ENCODE measurements at regions of chr7 and their contacts with region 1.

Region 1: DNA sequence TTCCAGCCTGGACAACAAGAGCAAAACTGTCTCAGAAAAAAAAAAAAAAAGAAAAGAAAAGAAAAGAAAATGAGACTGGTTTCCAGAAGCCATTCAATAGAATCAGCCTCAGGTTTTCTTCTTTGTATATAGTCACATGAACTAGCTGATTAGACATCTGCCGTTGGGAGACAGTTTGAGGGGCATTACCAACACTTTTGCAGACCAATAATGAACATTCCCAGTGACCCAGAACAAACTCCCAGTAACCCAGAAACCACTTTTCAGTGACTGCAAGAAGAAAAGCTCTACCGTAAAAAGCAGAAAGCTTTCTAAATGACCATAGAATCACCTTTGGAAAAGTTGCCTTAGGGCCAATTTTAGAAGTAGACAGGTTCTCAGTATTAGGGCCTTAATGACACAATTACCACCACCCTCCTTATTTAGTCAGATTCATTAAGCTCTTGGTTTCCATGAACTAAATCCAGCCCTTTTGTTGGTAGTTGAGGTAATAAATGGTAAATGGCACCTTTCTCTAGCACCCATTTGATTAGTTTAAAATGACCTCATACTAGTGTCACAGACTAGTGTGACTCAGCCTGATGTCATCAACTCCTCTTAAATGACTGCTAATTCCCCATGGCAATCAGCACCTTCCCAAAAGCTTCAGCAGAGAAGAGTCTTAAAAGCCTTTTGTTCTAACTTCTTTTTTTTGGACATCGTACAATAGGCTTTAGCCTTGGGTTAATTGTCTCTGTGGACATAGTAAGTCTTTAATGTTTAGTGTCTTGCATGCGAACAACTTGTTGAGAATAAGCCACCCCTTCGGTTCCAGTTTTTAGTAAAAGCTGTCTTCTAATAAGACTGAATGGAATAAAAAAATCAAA is 33.6 kb upstream of the XRCC2 start:
- DNase-seq: no peak
- ATAC-seq: no peak
- H3K4me3 Mint-ChIP-seq: no peak overlapping the region
- H3K27ac Mint-ChIP-seq: no peak overlapping the region
- H3K4me1 Mint-ChIP-seq: peaks cover 3% of the 10 kb centered on the region
- H3K27me3 Mint-ChIP-seq: no peaks in the 10 kb centered on the region
- CTCF ChIP-seq: no peak

Region 2: GRCh38 chr7:152145853-152146466 is 563.6 kb before region 1 on chr7:
- CTCF ChIA-PET with region 1: no interaction called
- POLR2A ChIA-PET with region 1: no interaction called
- intact Hi-C with region 1: loop called (anchors 5 kb)
- DNase-seq: no peak
- ATAC-seq: peak; percentile 40
- H3K4me3 Mint-ChIP-seq: no peak overlapping the region
- H3K27ac Mint-ChIP-seq: no peak overlapping the region
- H3K4me1 Mint-ChIP-seq: peaks cover 3% of the 10 kb centered on the region
- H3K27me3 Mint-ChIP-seq: no peaks in the 10 kb centered on the region
- CTCF ChIP-seq: no peak

Region 3: DNA sequence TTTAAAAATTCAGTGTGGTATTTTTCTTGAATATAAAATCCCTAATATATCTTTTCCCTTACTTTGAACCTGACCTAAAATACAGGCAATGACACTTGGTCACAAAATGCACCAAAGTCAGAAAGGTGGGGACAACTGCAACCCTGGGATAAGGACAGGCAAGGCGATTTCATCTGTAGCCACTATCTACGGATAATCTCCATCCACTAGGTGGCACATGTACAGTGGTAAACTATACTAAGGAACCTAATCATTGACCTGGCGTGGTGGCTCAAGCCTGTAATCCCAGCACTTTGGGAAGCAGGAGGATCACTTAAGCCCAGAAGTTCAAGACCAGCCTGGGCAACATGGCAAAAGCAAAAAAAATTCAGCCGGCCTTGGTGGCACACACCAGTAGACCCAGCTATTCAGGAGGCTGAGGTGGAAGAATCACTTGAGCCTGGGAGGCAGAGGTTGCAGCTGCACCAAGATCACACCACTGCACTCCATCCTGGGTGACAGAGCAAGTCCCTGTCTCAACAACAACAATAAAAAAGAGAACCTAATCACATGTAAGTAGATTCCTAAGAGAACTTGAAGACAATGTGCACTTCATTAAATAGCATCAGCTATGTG is 372.7 kb before region 1 on chr7:
- CTCF ChIA-PET with region 1: interaction called, 40 read pairs
- POLR2A ChIA-PET with region 1: no interaction called
- intact Hi-C with region 1: loop called (anchors 1 kb)
- DNase-seq: no peak
- ATAC-seq: peak; percentile 45
- H3K4me3 Mint-ChIP-seq: no peak overlapping the region
- H3K27ac Mint-ChIP-seq: no peak overlapping the region
- H3K4me1 Mint-ChIP-seq: peaks cover 63% of the 10 kb centered on the region
- H3K27me3 Mint-ChIP-seq: no peaks in the 10 kb centered on the region
- CTCF ChIP-seq: peak; percentile 49

Region 4: DNA sequence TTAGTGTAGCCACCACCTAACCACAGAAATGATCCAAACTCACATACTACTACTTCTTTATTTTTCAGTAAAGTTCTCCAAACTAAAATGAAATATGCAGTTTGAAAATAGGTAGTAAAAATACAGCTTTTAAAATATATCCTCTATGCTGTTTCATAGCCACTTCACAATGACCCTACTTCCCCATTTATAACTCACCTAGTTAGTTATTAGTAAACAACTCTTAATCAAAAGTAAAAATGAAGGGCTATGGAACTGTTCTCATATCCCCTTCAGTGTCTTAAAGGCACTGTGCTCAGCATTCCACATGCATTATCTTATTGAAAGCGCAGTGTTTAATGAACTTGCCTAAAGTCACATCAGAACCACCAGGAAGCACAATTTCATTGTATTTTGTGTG is 317.3 kb before region 1 on chr7:
- CTCF ChIA-PET with region 1: no interaction called
- POLR2A ChIA-PET with region 1: no interaction called
- intact Hi-C with region 1: loop called (anchors 2 kb)
- DNase-seq: no peak
- ATAC-seq: peak; percentile 52
- H3K4me3 Mint-ChIP-seq: peak overlapping the region; percentile 3
- H3K27ac Mint-ChIP-seq: no peak overlapping the region
- H3K4me1 Mint-ChIP-seq: peaks cover 64% of the 10 kb centered on the region
- H3K27me3 Mint-ChIP-seq: no peaks in the 10 kb centered on the region
- CTCF ChIP-seq: no peak

Region 5: DNA sequence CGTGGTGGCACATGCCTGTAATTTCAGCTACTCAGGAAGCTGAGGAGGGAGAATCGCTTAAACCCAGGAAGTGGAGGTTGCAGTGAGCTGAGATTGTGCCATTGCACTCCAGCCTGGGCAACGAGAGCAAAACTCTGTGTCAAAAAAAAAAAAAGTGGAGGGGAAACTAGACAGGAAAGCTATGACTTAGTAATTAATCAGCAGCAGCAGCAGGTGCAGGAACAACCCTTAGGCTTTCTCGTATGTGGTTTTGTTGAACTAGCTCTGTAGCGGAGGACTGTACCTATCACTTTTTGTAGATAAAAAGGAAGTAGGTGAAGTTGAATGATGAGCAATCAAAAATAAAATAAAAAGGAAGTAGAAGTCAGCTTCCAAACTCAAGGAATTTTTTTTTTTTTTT is 196.8 kb before region 1 on chr7:
- CTCF ChIA-PET with region 1: no interaction called
- POLR2A ChIA-PET with region 1: no interaction called
- intact Hi-C with region 1: no loop called
- DNase-seq: no peak
- ATAC-seq: peak; percentile 50
- H3K4me3 Mint-ChIP-seq: peak overlapping the region; percentile 35
- H3K27ac Mint-ChIP-seq: no peak overlapping the region
- H3K4me1 Mint-ChIP-seq: peaks cover 5% of the 10 kb centered on the region
- H3K27me3 Mint-ChIP-seq: peaks cover 2% of the 10 kb centered on the region
- CTCF ChIP-seq: no peak

Measured in activated B cell treated with CpG ODN at 0.5 μM for 24 hours (primary cell).